Pancreas (tissue), 10 donors: ENCODE measurements at regions of chr11 and their contacts with region 1.

Region 1: GRCh38 chr11:57527056-57527631 is 3.4 kb downstream of the TIMM10 start:
- DNase-seq: peak; percentile 67 to 88 (median 76)
- ATAC-seq: peak; percentile 34 to 54 (median 52)
- H3K4me3 ChIP-seq: no peak overlapping the region
- H3K27ac ChIP-seq: no peak overlapping the region
- H3K4me1 ChIP-seq: peaks cover 0 to 21% (median 0%) of the 10 kb centered on the region in 3 donors
- H3K27me3 ChIP-seq: no peaks in the 10 kb centered on the region
- CTCF ChIP-seq: peak; percentile 78 to 91 (median 86)

Region 2: DNA sequence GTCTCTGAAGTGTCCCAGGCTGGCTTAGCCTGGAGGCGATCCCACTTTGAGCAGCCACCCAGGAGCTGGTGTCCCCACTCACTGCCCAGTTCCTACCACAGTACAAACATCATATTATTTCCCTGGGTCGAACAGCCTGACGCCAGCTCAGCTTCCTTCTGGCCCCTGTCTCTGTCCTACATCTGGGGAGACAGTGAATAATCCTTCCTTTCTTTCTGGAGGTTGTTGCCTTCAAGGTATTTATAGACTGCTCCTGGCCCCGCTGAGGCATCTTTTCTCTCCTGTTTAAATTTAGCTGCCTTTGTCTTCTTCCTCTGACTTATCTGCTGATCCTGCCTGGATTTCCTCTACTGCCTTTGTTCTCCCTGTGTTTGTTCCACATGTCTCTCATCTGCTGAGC is 402.2 kb before region 1 on chr11:
- intact Hi-C with region 1: no loop called
- DNase-seq: no peak
- ATAC-seq: no peak
- H3K4me3 ChIP-seq: no peak overlapping the region
- H3K27ac ChIP-seq: no peak overlapping the region
- H3K4me1 ChIP-seq: no peaks in the 10 kb centered on the region
- H3K27me3 ChIP-seq: peaks cover 0 to 4% (median 0%) of the 10 kb centered on the region in 4 donors
- CTCF ChIP-seq: no peak

Region 3: GRCh38 chr11:57167125-57167846 is 359.9 kb before region 1 on chr11:
- intact Hi-C with region 1: no loop called
- DNase-seq: no peak
- ATAC-seq: no peak
- H3K4me3 ChIP-seq: no peak overlapping the region
- H3K27ac ChIP-seq: no peak overlapping the region
- H3K4me1 ChIP-seq: no peaks in the 10 kb centered on the region
- H3K27me3 ChIP-seq: no peaks in the 10 kb centered on the region
- CTCF ChIP-seq: no peak

Region 4: DNA sequence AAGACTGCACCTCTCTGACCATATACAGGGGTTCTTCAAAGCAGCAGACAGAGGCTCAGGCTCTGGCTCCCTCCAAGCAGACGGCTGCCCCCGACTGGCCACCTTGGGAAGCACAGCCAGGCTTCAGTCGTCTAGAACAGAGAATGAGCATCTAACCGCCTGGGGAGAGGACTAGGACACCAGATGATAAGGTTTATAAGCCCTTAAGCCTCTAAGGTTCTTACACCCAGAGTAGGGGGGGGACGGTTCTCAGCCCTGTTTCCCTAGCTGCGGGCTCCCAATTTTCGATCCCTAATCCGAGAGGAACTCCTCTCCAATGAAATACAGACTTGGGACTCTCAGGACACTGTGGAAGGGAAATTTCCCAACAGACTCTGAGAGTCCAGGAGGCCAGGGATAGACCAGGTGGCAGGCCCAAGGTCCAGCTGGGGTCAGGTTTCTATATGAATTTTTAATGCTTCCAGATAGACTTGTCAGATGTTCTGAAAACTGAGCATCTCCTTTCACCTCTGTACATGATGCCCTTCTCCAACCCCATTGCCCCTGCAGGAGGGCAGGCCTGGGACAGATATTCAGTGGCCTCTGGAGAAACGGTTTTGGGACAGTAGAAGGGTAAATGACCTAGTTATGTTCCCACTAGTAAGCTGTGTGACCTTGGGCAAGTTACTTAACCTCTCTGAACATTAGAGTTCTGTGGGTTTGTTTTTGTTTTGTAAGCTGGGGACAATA is 46.6 kb before region 1 on chr11:
- intact Hi-C with region 1: loop called in 2 of 3 experiments (anchors 5 to 10 kb)
- DNase-seq: peak; percentile 57 to 88 (median 76)
- ATAC-seq: peak; percentile 22 to 40 (median 33)
- H3K4me3 ChIP-seq: no peak overlapping the region
- H3K27ac ChIP-seq: no peak overlapping the region
- H3K4me1 ChIP-seq: peaks cover 14 to 19% (median 17%) of the 10 kb centered on the region in 3 donors
- H3K27me3 ChIP-seq: no peaks in the 10 kb centered on the region
- CTCF ChIP-seq: peak; percentile 17 to 63 (median 50)

Region 5: GRCh38 chr11:57493507-57494503 is 33.3 kb before region 1 on chr11:
- intact Hi-C with region 1: loop called in 2 of 3 experiments (anchors 5 kb)
- DNase-seq: peak; percentile 76 to 94 (median 89)
- ATAC-seq: peak; percentile 62 to 81 (median 71)
- H3K4me3 ChIP-seq: peak overlapping the region in 1 of 4 donors; percentile 6
- H3K27ac ChIP-seq: peak overlapping the region in 2 of 4 donors; percentile 5 to 52
- H3K4me1 ChIP-seq: peaks cover 39 to 46% (median 45%) of the 10 kb centered on the region in 3 donors
- H3K27me3 ChIP-seq: no peaks in the 10 kb centered on the region
- CTCF ChIP-seq: peak; percentile 89 to 95 (median 91)